Sigmoid colon (tissue), 7 donors: ENCODE measurements at regions of chr4 and their contacts with region 1.

Region 1: DNA sequence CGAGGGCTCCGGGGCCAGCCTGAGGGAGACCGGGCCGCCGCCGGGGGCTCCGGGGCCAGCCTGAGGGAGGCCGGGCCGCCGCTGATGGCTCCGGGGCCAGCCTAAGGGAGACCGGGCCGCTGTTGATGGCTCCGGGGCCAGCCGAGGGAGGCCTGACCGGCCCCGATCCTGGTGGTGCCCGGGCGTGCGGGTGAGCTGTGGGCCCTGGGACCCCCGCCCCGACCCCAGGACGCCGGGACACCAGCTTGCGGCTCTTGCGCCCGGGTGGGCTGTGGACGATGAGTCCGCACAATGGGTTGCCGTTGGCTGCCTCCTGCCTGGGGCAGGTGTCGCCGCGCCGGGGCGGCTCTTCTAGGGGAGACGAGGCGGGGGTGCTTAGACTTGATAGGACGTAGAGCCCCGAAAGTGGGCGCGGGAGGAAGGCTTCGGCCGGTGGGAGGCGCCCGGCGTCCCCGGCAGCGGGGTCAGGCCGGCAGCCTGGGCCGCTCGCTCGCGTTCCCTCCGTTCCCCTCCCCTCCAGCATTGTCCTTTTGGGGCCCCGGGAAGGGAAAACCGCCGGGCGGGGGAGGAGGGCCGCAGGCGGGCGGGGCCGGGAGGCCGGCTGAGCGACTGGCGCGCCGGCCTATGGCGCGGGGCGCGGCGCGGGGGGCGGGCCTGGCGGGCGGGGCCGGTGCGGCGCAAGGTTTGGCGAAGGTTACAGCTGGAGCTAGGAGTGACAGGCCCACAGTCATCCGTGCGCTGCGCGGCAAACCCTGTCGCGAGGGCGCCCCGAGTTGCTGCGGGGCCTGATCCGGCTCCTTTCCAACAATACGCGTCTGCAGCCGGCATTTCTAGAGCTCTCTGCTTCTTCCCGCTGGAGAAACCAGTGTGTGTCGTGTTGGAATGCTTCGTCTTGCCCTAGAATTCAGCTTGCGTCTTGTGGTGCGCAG is 790 bp downstream of the KIAA0232 start:
- DNase-seq: peak; percentile 95
- H3K4me3 ChIP-seq: peak overlapping the region; percentile 98 to 100 (median 98)
- H3K27ac ChIP-seq: peak overlapping the region; percentile 100
- H3K4me1 ChIP-seq: peaks cover 0 to 51% (median 25%) of the 10 kb centered on the region in 4 donors
- H3K27me3 ChIP-seq: no peaks in the 10 kb centered on the region
- CTCF ChIP-seq: no peak
- EP300 ChIP-seq: no peak
- POLR2A ChIP-seq: peak; percentile 77 to 80

Region 2: GRCh38 chr4:6298035-6298434 is 485.3 kb before region 1 on chr4:
- intact Hi-C with region 1: no loop called
- DNase-seq: peak; percentile 59
- H3K4me3 ChIP-seq: no peak overlapping the region
- H3K27ac ChIP-seq: no peak overlapping the region
- H3K4me1 ChIP-seq: peaks cover 0 to 5% (median 0%) of the 10 kb centered on the region in 4 donors
- H3K27me3 ChIP-seq: no peaks in the 10 kb centered on the region
- CTCF ChIP-seq: no peak
- EP300 ChIP-seq: no peak
- POLR2A ChIP-seq: no peak

Region 3: GRCh38 chr4:6538575-6538974 is 244.7 kb before region 1 on chr4:
- intact Hi-C with region 1: no loop called
- DNase-seq: no peak
- H3K4me3 ChIP-seq: no peak overlapping the region
- H3K27ac ChIP-seq: no peak overlapping the region
- H3K4me1 ChIP-seq: no peaks in the 10 kb centered on the region
- H3K27me3 ChIP-seq: peaks cover 0 to 46% (median 0%) of the 10 kb centered on the region in 3 donors
- CTCF ChIP-seq: no peak
- EP300 ChIP-seq: no peak
- POLR2A ChIP-seq: no peak

Region 4: DNA sequence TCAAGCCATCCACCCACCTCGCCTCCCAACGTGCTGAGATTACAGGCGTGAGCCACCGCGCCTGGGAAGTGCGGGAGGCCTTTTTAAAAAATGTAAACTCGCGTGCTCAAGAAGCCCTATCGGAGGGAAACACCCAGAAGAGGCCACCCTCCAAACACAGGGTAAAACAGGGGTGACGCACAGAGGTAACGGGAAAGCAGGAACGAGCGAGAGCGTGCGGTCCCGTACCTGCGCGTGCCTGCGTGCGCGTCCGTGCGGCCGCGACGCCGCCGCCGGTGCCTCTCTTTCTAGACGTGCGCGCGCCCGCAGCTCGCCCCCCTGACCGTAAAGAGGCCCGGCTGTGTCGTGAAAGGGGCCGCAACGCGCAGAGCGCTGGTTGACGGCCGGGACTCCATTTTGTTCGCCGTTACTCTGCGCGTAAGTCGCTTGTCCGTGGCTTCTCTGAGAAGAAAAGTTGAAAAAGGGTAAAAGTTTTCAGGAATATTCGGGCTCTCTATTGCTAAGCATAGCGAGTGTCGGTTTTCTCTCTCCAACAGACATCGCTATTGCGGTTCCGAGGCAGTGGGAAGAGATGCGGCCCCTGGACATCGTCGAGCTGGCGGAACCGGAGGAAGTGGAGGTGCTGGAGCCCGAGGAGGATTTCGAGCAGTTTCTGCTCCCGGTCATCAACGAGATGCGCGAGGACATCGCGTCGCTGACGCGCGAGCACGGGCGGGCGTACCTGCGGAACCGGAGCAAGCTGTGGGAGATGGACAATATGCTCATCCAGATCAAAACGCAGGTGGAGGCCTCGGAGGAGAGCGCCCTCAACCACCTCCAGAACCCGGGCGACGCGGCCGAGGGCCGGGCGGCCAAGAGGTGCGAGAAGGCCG is 142.8 kb before region 1 on chr4 and contains the start of gene MRFAP1:
- intact Hi-C with region 1: loop called (anchors 5 kb)
- DNase-seq: peak; percentile 96
- H3K4me3 ChIP-seq: peak within 1 kb of the TSS; percentile 71 to 85 (median 84)
- H3K27ac ChIP-seq: peak within 1 kb of the TSS; percentile 93 to 96 (median 95)
- H3K4me1 ChIP-seq: peaks cover 0 to 36% (median 30%) of the 10 kb centered on the region in 4 donors
- H3K27me3 ChIP-seq: no peaks in the 10 kb centered on the region
- CTCF ChIP-seq: no peak
- EP300 ChIP-seq: peak in 1 of 4 donors; percentile 53
- POLR2A ChIP-seq: peak; percentile 92 to 93
- total RNA-seq, gene MRFAP1: 196 to 226 (median 211) TPM

Region 5: DNA sequence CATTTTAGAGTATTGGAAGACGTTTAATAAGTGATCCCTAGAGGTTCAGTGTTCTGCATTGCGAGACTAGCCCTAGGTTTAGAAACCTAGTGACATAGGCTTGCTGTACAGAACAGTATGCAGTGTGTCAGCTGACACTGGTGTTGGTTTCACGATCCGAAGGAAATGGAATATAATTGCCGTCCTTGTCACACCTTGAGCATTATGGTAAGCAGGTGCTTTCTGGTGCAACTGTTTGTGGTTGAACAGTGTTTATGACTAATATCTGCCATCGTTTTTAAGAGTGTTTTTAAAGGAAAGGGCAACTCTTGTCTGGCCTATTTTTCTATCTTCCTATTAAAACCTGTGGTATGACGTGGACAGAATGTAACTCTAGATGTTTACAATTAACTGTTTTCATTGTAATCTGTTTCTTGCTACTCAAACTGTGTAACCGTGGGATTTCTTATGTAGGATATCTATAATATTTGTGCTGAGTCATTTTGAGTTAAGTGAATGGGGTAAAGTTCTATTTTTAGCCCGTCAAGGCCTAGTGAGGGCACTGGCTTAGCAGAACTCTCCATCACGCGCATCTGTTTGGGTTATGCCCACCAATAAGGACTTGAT is 72.5 kb after region 1 on chr4:
- intact Hi-C with region 1: loop called (anchors 1 kb)
- DNase-seq: no peak
- H3K4me3 ChIP-seq: no peak overlapping the region
- H3K27ac ChIP-seq: peak overlapping the region; percentile 47 to 78 (median 60)
- H3K4me1 ChIP-seq: peaks cover 0 to 31% (median 26%) of the 10 kb centered on the region in 4 donors
- H3K27me3 ChIP-seq: no peaks in the 10 kb centered on the region
- CTCF ChIP-seq: no peak
- EP300 ChIP-seq: no peak
- POLR2A ChIP-seq: no peak

Region 6: DNA sequence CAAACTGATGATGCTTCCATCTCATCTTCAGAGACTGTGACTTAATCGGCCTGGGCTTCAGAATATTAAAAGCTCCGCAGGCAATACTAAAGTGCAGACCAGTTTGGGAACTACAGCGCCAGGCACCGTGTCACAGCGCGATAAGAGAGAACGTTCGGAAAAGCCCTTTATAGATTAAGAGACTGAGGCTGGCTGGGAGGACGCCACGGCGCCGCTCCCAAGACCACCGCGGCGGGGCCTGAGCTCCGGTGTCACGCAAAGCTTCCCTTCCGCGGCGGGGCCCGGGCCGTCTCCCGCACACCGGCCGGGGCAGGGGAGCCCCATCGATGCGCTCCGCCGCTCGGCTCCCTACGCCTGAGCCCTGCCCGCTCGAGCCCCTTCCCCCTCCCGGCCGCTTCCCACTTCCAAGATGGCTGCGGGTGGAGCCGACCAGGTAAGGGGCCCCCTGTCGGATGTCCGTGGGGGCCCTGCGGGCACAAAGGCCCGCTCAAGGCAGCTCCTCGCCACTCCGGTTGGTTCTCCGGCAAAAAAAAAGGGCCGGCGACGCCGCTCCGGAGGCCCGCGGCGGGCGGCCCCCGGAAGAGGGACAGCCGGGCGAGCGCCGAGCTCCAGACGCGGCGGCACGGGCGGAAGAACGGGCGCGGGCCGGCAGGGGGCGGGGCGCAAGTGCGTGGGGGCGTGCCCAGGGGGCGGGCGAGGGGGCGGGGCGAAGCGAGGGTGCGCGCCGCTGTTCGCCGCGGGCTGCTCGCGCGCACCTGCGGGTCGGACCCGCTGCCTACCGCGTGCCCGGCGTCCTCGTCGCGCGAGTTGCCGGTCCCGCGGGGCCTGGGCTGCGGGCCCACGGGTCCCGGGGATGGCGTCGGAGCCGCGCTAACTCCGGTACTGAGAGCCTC is 126.0 kb after region 1 on chr4 and contains the start of gene TBC1D14:
- intact Hi-C with region 1: loop called (anchors 2 kb)
- DNase-seq: peak; percentile 95
- H3K4me3 ChIP-seq: peak within 1 kb of the TSS; percentile 76 to 88 (median 84)
- H3K27ac ChIP-seq: peak within 1 kb of the TSS; percentile 96 to 99 (median 98)
- H3K4me1 ChIP-seq: peaks cover 0 to 30% (median 26%) of the 10 kb centered on the region in 4 donors
- H3K27me3 ChIP-seq: no peaks in the 10 kb centered on the region
- CTCF ChIP-seq: no peak
- EP300 ChIP-seq: no peak
- POLR2A ChIP-seq: no peak
- total RNA-seq, gene TBC1D14: 26.3 to 46.4 (median 32.6) TPM

Region 7: GRCh38 chr4:7042697-7043464 is 259.6 kb after region 1 on chr4 and contains the start of gene TADA2B:
- intact Hi-C with region 1: loop called (anchors 5 kb)
- DNase-seq: peak; percentile 99
- H3K4me3 ChIP-seq: peak within 1 kb of the TSS; percentile 86 to 99 (median 98)
- H3K27ac ChIP-seq: peak within 1 kb of the TSS; percentile 91 to 95 (median 92)
- H3K4me1 ChIP-seq: peaks cover 0 to 51% (median 47%) of the 10 kb centered on the region in 4 donors
- H3K27me3 ChIP-seq: no peaks in the 10 kb centered on the region
- CTCF ChIP-seq: peak in 1 of 4 experiments; percentile 30
- EP300 ChIP-seq: no peak
- POLR2A ChIP-seq: no peak
- total RNA-seq, gene TADA2B: 15.0 to 22.7 (median 17.2) TPM